Left ventricle myocardium inferior (tissue), 1 donor: ENCODE measurements at regions of chr1 and their contacts with region 1.

Region 1: DNA sequence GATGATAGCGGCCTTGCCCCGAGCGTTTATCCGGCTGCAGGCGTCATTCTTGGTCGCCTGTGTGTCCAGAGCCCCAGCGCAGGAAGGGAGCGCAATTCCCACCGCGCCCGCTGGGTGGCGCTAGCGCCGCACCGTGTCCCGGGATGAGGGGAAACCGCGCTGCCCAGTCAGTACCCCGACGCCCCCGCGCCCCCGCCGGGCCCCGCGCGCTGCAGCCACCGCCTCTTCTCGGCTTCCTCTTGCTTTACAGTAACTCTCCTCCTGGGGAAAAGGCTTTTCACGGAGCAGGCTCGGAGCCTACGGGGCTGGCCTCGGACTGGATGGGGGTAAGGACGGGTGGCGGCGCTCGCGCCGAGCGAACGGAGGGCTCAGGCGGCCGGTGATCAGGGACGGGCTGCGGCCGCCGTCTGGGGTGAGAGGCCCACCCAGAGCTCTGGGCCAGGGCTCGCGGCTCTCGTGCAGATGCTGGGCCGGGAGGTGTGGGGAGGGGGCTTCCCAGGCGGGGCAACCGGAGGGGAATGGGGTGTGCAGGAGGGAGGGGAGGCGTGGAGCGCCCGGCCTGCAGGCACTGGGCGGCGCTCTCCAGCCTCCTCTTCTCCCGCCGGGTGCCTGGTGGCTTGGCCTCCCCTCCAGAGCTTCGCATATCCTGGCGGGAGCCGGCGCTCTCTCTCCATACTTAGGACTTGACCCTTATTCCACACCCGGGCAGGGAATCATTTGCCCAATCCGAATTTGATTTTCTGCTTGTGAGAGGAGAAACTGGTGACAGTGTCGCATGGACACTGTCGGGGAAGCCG is 29.8 kb downstream of the TEX35 start:
- DNase-seq: peak; percentile 90
- H3K4me3 ChIP-seq: peak overlapping the region; percentile 90
- H3K27ac ChIP-seq: peak overlapping the region; percentile 91
- H3K4me1 ChIP-seq: peaks cover 43% of the 10 kb centered on the region
- H3K27me3 ChIP-seq: no peaks in the 10 kb centered on the region
- CTCF ChIP-seq: peak; percentile 96

Region 2: DNA sequence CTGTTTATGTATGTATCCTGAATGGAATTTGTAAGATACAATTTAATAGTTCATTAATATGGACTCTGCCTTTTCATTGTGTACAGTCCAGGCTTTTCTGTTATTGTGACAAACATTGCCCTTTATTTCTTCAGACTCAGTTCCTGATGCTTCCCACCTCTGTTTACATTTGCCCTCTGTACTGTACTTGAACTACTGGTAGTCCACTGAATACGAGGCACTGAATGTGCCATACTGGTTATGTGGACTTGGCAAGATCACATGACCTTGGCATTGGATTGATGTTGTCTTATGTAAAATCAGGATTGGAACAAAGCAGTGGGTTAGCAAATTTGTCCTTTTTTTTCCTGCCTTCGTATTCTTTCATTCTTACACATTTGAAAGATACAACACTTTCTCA is 210.1 kb after region 1 on chr1:
- intact Hi-C with region 1: loop called (anchors 2 kb)
- DNase-seq: no peak
- H3K4me3 ChIP-seq: no peak overlapping the region
- H3K27ac ChIP-seq: no peak overlapping the region
- H3K4me1 ChIP-seq: no peaks in the 10 kb centered on the region
- H3K27me3 ChIP-seq: no peaks in the 10 kb centered on the region
- CTCF ChIP-seq: no peak

Region 3: DNA sequence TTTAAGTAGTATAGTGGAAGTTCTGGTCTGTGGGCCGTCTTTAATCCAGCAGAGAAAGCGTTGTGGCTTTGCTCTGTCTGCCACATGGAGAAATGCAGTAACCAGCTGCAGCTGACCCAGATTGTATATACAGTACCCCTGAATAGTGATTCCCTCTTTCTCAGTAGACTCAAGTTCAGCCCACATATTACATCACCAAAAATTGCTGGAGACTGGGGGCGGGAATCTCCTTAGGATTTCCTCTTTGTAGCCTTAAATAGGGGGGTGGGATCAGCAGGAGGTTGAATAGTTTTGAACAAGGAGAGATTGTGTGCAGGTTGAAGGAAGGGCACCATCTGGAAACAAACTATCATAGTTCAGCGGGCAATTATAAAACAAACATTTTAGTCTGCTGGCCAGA is 328.2 kb after region 1 on chr1 and contains the start of gene ANGPTL1:
- intact Hi-C with region 1: no loop called
- DNase-seq: no peak
- H3K4me3 ChIP-seq: peak within 1 kb of the TSS; percentile 56
- H3K27ac ChIP-seq: peak within 1 kb of the TSS; percentile 64
- H3K4me1 ChIP-seq: peaks cover 42% of the 10 kb centered on the region
- H3K27me3 ChIP-seq: no peaks in the 10 kb centered on the region
- CTCF ChIP-seq: no peak
- total RNA-seq, gene ANGPTL1: 11.5 TPM